Right lobe of liver (tissue), 6 donors: ENCODE measurements at regions of chr18 and their contacts with region 1.

Region 1: GRCh38 chr18:13823707-13824395 is at the start of gene MC5R:
- DNase-seq: peak; percentile 68 to 77 (median 72)
- ATAC-seq: peak; percentile 96 to 99 (median 98)
- H3K4me3 ChIP-seq: peak within 1 kb of the TSS; percentile 33 to 49 (median 36)
- H3K27ac ChIP-seq: no peak within 1 kb of the TSS
- H3K4me1 ChIP-seq: peaks cover 0 to 4% (median 0%) of the 10 kb centered on the region in 4 donors
- H3K27me3 ChIP-seq: no peaks in the 10 kb centered on the region
- CTCF ChIP-seq: peak; percentile 72 to 95 (median 80)
- POLR2A ChIP-seq: no peak
- total RNA-seq, gene MC5R: not detected

Region 2: DNA sequence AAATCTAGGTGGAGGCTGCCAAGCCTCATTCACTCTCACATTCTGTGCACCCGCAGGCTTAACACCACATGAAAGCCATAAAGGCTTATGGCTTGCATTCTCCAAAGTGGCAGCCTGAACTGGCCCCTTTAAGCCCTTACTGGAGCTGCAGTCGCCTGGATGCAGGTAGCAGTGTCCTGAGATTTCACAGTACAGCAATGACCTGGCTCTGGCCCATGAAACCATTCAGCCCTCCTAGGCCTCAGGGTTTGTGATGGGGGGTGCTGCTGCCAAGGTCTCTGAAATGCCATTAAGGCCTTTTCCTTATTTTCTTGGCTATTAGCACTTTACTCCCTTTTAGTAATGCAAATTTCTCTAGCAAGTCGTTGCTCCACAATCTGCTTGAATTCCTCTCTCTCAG is 48.8 kb before region 1 on chr18:
- intact Hi-C with region 1: no loop called
- DNase-seq: no peak
- ATAC-seq: no peak
- H3K4me3 ChIP-seq: no peak overlapping the region
- H3K27ac ChIP-seq: no peak overlapping the region
- H3K4me1 ChIP-seq: no peaks in the 10 kb centered on the region
- H3K27me3 ChIP-seq: no peaks in the 10 kb centered on the region
- CTCF ChIP-seq: no peak
- POLR2A ChIP-seq: no peak

Region 3: GRCh38 chr18:14026199-14026598 is 202.3 kb after region 1 on chr18:
- intact Hi-C with region 1: no loop called
- DNase-seq: no peak
- ATAC-seq: no peak
- H3K4me3 ChIP-seq: no peak overlapping the region
- H3K27ac ChIP-seq: no peak overlapping the region
- H3K4me1 ChIP-seq: no peaks in the 10 kb centered on the region
- H3K27me3 ChIP-seq: no peaks in the 10 kb centered on the region
- CTCF ChIP-seq: no peak
- POLR2A ChIP-seq: no peak

Region 4: GRCh38 chr18:14074187-14074586 is 250.3 kb after region 1 on chr18:
- intact Hi-C with region 1: loop called in 1 of 2 experiments (anchors 10 kb)
- DNase-seq: no peak
- ATAC-seq: no peak
- H3K4me3 ChIP-seq: no peak overlapping the region
- H3K27ac ChIP-seq: no peak overlapping the region
- H3K4me1 ChIP-seq: no peaks in the 10 kb centered on the region
- H3K27me3 ChIP-seq: no peaks in the 10 kb centered on the region
- CTCF ChIP-seq: no peak
- POLR2A ChIP-seq: no peak